Caco-2 (cell line): ENCODE measurements at regions of chr7 and their contacts with region 1.

Region 1: DNA sequence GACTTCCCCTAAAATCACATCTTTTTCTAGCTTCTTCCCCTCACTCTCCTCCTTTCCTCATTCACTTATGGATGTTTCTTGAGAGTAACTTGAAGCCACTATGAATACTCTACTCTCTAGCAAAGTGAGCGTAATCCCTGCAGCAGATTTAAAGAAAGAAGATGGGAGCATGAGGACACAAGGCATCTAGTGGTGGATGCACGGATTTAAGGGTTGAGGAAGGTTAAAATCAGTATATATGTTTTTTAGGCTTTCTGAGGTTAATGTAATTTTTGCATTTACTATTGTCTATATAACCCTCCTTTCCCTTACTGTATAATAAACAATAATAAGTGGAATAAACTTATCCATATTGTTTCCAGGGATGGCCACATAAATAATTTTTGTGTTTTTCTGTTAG is 495.2 kb upstream of the TPK1 start:
- DNase-seq: no peak
- H3K4me3 ChIP-seq: no peak overlapping the region
- H3K4me3 Mint-ChIP-seq: no peak overlapping the region
- H3K27ac Mint-ChIP-seq: no peak overlapping the region
- H3K4me1 ChIP-seq: no peaks in the 10 kb centered on the region
- H3K4me1 Mint-ChIP-seq: no peaks in the 10 kb centered on the region
- H3K27me3 ChIP-seq: no peaks in the 10 kb centered on the region
- H3K27me3 Mint-ChIP-seq: no peaks in the 10 kb centered on the region
- CTCF ChIP-seq: peak; percentile 42 to 43

Region 2: GRCh38 chr7:145036604-145037405 is 294.3 kb before region 1 on chr7:
- CTCF ChIA-PET with region 1: no interaction called
- POLR2A ChIA-PET with region 1: no interaction called
- intact Hi-C with region 1: loop called (anchors 1 kb)
- DNase-seq: peak; percentile 43 to 69
- H3K4me3 ChIP-seq: no peak overlapping the region
- H3K4me3 Mint-ChIP-seq: no peak overlapping the region
- H3K27ac Mint-ChIP-seq: no peak overlapping the region
- H3K4me1 ChIP-seq: no peaks in the 10 kb centered on the region
- H3K4me1 Mint-ChIP-seq: no peaks in the 10 kb centered on the region
- H3K27me3 ChIP-seq: no peaks in the 10 kb centered on the region
- H3K27me3 Mint-ChIP-seq: peaks cover 11% of the 10 kb centered on the region
- CTCF ChIP-seq: peak; percentile 70 to 78

Region 3: GRCh38 chr7:145169942-145170341 is 161.1 kb before region 1 on chr7:
- CTCF ChIA-PET with region 1: no interaction called
- POLR2A ChIA-PET with region 1: no interaction called
- intact Hi-C with region 1: loop called (anchors 10 kb)
- DNase-seq: no peak
- H3K4me3 ChIP-seq: no peak overlapping the region
- H3K4me3 Mint-ChIP-seq: no peak overlapping the region
- H3K27ac Mint-ChIP-seq: no peak overlapping the region
- H3K4me1 ChIP-seq: no peaks in the 10 kb centered on the region
- H3K4me1 Mint-ChIP-seq: no peaks in the 10 kb centered on the region
- H3K27me3 ChIP-seq: no peaks in the 10 kb centered on the region
- H3K27me3 Mint-ChIP-seq: peaks cover 5% of the 10 kb centered on the region
- CTCF ChIP-seq: no peak

Region 4: DNA sequence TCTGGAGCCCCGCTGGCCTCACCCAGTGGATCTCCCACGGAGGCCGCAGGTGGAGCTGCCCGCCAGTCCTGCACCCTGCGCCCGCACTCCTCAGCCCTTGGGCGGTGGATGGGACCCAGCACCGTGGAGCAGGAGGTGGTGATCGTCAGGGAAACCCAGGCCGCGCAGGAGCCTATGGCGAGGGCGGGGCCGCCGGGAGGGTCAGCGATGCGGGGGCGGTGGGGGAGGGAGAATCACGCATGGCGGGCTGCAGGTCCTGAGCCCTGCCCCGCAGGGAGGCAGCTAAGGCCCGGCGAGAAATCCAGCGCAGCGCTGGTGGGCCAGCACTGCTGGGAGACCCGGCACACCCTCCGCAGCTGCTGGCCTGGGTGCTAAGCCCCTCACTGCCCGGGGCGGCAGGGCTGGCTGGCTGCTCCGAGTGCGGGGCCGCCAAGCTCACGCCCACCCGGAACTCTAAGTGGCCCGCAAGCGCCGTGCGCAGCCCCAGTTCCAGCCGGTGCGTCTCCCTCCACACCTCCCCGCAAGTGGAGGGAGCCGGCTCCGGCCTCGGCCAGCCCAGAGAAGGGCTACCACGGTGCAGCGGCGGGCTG is 29.5 kb after region 1 on chr7:
- CTCF ChIA-PET with region 1: no interaction called
- POLR2A ChIA-PET with region 1: no interaction called
- intact Hi-C with region 1: no loop called
- DNase-seq: no peak
- H3K4me3 ChIP-seq: no peak overlapping the region
- H3K4me3 Mint-ChIP-seq: no peak overlapping the region
- H3K27ac Mint-ChIP-seq: no peak overlapping the region
- H3K4me1 ChIP-seq: no peaks in the 10 kb centered on the region
- H3K4me1 Mint-ChIP-seq: no peaks in the 10 kb centered on the region
- H3K27me3 ChIP-seq: no peaks in the 10 kb centered on the region
- H3K27me3 Mint-ChIP-seq: no peaks in the 10 kb centered on the region
- CTCF ChIP-seq: no peak

Region 5: DNA sequence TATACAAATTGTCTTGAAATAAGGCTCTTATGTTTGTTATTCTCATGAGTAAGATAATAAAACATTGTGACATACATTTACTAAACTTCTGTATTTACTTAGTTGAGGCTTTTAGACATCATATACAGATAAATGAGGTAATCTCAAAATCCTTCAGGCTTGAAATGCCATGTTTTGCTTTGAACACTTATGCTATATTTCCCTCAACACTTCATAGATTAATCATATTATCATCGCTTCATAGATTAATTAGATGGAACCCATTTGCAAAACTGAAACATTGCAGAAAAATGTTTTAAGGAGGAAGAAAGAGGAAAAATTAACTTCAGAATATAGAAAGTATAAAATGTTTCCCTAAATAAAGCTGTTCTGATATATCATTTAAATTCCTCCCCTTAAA is 620.5 kb after region 1 on chr7:
- CTCF ChIA-PET with region 1: no interaction called
- POLR2A ChIA-PET with region 1: no interaction called
- intact Hi-C with region 1: no loop called
- DNase-seq: no peak
- H3K4me3 ChIP-seq: no peak overlapping the region
- H3K4me3 Mint-ChIP-seq: no peak overlapping the region
- H3K27ac Mint-ChIP-seq: no peak overlapping the region
- H3K4me1 ChIP-seq: no peaks in the 10 kb centered on the region
- H3K4me1 Mint-ChIP-seq: no peaks in the 10 kb centered on the region
- H3K27me3 ChIP-seq: no peaks in the 10 kb centered on the region
- H3K27me3 Mint-ChIP-seq: no peaks in the 10 kb centered on the region
- CTCF ChIP-seq: no peak